ENCODE measurements at regions of chrX and their contacts with region 1.

Region 1: GRCh38 chrX:65528705-65529340 is 5.8 kb downstream of the LAS1L start:
- DNase-seq: peak; percentile 19
- H3K4me3 ChIP-seq: no peak overlapping the region
- H3K27ac ChIP-seq: no peak overlapping the region
- H3K4me1 ChIP-seq: peaks cover 8% of the 10 kb centered on the region
- H3K27me3 ChIP-seq: no peaks in the 10 kb centered on the region
- CTCF ChIP-seq: peak; percentile 79 to 84
- POLR2A ChIP-seq: no peak

Region 2: DNA sequence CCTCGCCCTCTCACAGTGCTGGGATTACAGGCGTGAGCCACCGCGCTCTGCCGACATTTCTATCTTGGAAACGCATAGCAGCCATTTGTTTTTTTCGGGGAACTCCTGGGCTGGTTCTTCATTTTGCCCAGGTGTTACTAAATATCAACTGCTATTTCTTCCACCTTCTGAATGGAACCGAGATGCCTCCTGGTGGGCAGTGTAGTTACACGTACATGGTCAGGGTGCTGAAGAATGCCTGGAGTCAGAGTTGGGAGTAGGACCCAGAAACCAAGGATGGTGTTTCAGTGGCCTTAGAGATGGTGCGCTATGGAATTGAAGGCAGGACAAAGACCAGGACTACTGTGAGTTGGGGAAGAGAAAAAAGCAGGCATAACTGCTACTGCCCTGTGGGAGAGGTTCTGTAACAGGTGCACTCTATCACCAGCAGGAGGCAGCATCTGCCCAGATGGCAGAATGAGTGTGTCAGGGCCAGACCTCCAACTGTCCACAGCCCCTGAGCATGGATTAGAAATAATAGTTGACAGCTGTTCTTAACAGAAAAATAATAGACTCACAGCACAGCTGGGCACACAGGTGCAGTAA is 634.3 kb before region 1 on chrX:
- CTCF ChIA-PET with region 1: interaction called, 3 read pairs
- POLR2A ChIA-PET with region 1: no interaction called
- dilution Hi-C with region 1: no loop called
- intact Hi-C with region 1: loop called (anchors 1 kb)
- DNase-seq: peak; percentile 2
- H3K4me3 ChIP-seq: no peak overlapping the region
- H3K27ac ChIP-seq: no peak overlapping the region
- H3K4me1 ChIP-seq: no peaks in the 10 kb centered on the region
- H3K27me3 ChIP-seq: no peaks in the 10 kb centered on the region
- CTCF ChIP-seq: peak; percentile 27 to 42
- POLR2A ChIP-seq: no peak

Region 3: DNA sequence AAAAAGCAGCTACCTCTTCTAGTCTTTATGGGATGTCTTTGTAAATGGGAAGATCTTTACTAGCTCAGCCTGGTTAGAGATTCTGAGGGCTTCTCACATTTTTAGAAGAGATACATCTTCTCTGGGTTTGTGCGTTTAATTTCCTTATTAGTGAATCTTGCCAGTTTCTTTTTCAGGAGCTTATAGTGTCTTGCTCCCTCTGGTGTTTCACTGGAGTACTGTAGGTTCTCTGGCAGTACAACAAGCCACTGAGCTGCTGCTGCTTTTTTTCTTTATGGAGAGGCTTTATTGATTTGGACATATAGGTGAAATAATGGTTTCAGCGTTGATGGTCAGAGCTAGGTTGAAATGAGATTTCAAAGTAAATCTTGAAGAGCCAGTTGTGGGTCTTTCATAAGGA is 77.2 kb before region 1 on chrX:
- CTCF ChIA-PET with region 1: interaction called, 10 read pairs
- POLR2A ChIA-PET with region 1: no interaction called
- dilution Hi-C with region 1: no loop called
- intact Hi-C with region 1: no loop called
- DNase-seq: peak; percentile 19
- H3K4me3 ChIP-seq: no peak overlapping the region
- H3K27ac ChIP-seq: no peak overlapping the region
- H3K4me1 ChIP-seq: no peaks in the 10 kb centered on the region
- H3K27me3 ChIP-seq: no peaks in the 10 kb centered on the region
- CTCF ChIP-seq: peak in 1 of 2 donors; percentile 40
- POLR2A ChIP-seq: no peak

Region 4: DNA sequence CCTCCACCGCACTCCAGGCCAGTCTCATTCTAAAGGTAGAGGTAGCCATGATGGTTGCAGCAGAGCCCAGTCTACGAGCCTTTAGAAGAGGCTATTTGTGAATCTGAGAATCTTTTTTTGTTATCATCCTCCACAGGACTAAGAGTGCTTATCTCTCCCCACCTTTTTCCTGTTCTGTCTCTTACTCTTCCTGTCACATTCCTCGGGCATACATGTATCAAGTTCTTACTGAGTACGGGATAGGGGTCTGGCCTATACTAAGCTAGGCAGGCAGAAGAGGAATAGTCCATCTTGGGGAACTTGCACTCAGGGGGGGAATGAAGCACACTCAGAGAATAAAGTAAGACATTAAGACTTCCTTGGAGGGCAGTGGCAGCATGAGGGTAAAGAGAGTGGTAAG is 20.0 kb before region 1 on chrX:
- CTCF ChIA-PET with region 1: interaction called, 4 read pairs
- POLR2A ChIA-PET with region 1: no interaction called
- dilution Hi-C with region 1: no loop called
- intact Hi-C with region 1: loop called (anchors 1 kb)
- DNase-seq: peak; percentile 11
- H3K4me3 ChIP-seq: no peak overlapping the region
- H3K27ac ChIP-seq: peak overlapping the region; percentile 17
- H3K4me1 ChIP-seq: peaks cover 6% of the 10 kb centered on the region
- H3K27me3 ChIP-seq: no peaks in the 10 kb centered on the region
- CTCF ChIP-seq: no peak
- POLR2A ChIP-seq: no peak

Region 5: GRCh38 chrX:65644621-65645270 is 115.9 kb after region 1 on chrX:
- CTCF ChIA-PET with region 1: no interaction called
- POLR2A ChIA-PET with region 1: no interaction called
- dilution Hi-C with region 1: no loop called
- intact Hi-C with region 1: no loop called
- DNase-seq: peak; percentile 90
- H3K4me3 ChIP-seq: no peak overlapping the region
- H3K27ac ChIP-seq: peak overlapping the region; percentile 70
- H3K4me1 ChIP-seq: peaks cover 22% of the 10 kb centered on the region
- H3K27me3 ChIP-seq: no peaks in the 10 kb centered on the region
- CTCF ChIP-seq: no peak
- POLR2A ChIP-seq: no peak